Caco-2 (cell line): ENCODE measurements at regions of chr4 and their contacts with region 1.

Region 1: DNA sequence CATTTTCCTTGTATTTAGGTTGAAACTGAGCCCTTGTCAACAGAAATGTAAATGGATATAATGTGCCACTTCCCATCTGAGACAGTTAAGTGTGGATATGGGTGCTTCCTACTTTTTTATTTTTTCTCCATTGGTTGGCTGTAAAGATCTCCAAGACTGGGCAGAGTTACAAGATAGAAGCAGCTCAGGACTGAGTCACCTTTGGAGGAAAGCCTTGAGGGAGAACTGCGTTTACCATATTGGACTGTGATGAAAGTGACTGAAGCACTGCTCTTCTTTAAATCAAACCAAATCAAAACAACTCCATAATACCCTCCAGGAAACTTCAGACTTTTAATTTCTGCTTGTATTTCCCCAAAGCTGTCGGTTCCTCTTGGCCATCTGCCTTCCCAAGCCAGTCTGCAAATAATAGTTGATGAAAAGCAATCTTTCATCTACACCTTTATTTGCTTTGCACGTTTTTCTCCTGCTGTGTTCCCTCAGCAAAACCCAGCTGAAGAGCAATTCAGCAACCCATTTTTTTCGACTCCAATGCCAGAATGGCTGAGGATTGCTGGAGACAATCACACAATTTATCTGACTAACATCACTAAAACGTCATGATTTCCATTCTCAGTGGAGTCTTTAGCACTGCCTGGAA is 94.4 kb downstream of the GPRIN3 start:
- DNase-seq: no peak
- H3K4me3 ChIP-seq: no peak overlapping the region
- H3K4me3 Mint-ChIP-seq: no peak overlapping the region
- H3K27ac Mint-ChIP-seq: no peak overlapping the region
- H3K4me1 ChIP-seq: no peaks in the 10 kb centered on the region
- H3K4me1 Mint-ChIP-seq: peaks cover 7% of the 10 kb centered on the region
- H3K27me3 ChIP-seq: no peaks in the 10 kb centered on the region
- H3K27me3 Mint-ChIP-seq: no peaks in the 10 kb centered on the region
- CTCF ChIP-seq: no peak

Region 2: DNA sequence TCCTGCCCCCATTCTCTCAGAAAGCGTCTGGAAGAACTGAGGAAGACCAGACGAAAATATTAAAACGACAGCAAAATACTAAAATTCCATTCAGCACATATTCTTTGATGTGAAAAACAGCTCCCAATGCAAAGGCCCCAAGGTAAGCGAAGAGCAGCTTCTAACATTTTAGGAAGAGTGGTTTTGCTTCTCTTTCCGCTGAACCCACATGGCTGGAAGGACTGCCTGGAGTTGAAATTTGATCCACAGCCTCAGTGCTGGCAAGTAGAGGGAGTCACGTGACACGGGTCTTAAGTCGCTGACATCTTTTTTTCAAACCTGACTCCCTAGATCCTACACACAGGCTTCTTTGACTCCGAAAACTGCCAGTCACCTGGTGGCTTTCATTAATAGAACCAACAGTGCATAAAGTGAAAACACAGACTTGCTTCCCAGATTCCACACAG is 156.2 kb before region 1 on chr4 and contains the start of gene FAM13A:
- CTCF ChIA-PET with region 1: no interaction called
- POLR2A ChIA-PET with region 1: no interaction called
- intact Hi-C with region 1: loop called (anchors 10 kb)
- DNase-seq: peak; percentile 70 to 73
- H3K4me3 ChIP-seq: peak within 1 kb of the TSS; percentile 36
- H3K4me3 Mint-ChIP-seq: peak within 1 kb of the TSS; percentile 77
- H3K27ac Mint-ChIP-seq: peak within 1 kb of the TSS; percentile 51
- H3K4me1 ChIP-seq: peaks cover 15% of the 10 kb centered on the region
- H3K4me1 Mint-ChIP-seq: peaks cover 31% of the 10 kb centered on the region
- H3K27me3 ChIP-seq: no peaks in the 10 kb centered on the region
- H3K27me3 Mint-ChIP-seq: no peaks in the 10 kb centered on the region
- CTCF ChIP-seq: no peak
- total RNA-seq, gene FAM13A: 10.3 and 11.0 TPM in 2 replicates